T-cell (primary cell): ENCODE measurements at regions of chr7 and their contacts with region 1.

Region 1: GRCh38 chr7:8274589-8274988 is 12.6 kb upstream of the ICA1 start:
- DNase-seq: no peak
- ATAC-seq: no peak
- H3K4me3 ChIP-seq: no peak overlapping the region
- H3K4me3 Mint-ChIP-seq: no peak overlapping the region
- H3K27ac ChIP-seq: no peak overlapping the region
- H3K27ac Mint-ChIP-seq: no peak overlapping the region
- H3K4me1 ChIP-seq: no peaks in the 10 kb centered on the region
- H3K4me1 Mint-ChIP-seq: no peaks in the 10 kb centered on the region
- H3K27me3 ChIP-seq: peaks cover 0 to 4% of the 10 kb centered on the region in 2 experiments
- H3K27me3 Mint-ChIP-seq: peaks cover 6 to 16% of the 10 kb centered on the region in 2 donors

Region 2: DNA sequence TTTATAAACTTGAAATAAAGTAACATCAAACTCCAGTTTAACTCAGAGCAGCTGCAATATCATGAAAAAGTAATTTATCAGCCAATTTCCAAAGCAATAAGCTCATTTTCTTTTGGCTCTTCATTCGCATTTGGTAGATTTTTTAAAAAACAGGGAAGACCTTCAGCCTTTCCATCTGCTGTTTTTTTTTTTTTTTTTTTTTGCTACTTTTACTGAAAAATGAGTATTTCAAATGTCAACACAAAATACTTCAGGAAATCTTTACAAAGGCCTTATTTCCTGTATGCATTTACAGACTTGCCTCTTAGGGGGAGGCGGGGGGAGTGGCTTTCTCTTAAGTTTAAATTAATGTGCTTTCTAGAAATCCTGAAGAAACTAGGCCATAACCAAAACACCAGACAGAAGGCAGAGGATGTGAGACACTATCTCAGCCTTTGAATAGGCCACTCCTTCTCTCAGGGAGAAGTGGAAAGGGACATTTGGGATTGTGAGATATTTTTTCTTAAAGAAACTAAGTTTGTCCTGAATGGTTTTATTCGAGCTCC is 830.7 kb before region 1 on chr7:
- CTCF ChIA-PET with region 1: no interaction called
- POLR2A ChIA-PET with region 1: interaction called in 1 of 2 experiments, 13 read pairs
- DNase-seq: peak in 2 of 35 experiments; percentile 4 to 12
- ATAC-seq: no peak
- H3K4me3 ChIP-seq: no peak overlapping the region
- H3K4me3 Mint-ChIP-seq: no peak overlapping the region
- H3K27ac ChIP-seq: no peak overlapping the region
- H3K27ac Mint-ChIP-seq: peak overlapping the region in 1 of 2 donors; percentile 5
- H3K4me1 ChIP-seq: peaks cover 0 to 5% of the 10 kb centered on the region in 2 experiments
- H3K4me1 Mint-ChIP-seq: peaks cover 10 to 13% (median 11%) of the 10 kb centered on the region in 3 donors
- H3K27me3 ChIP-seq: peaks cover 0 to 3% of the 10 kb centered on the region in 2 experiments
- H3K27me3 Mint-ChIP-seq: peaks cover 0 to 3% of the 10 kb centered on the region in 2 donors

Region 3: DNA sequence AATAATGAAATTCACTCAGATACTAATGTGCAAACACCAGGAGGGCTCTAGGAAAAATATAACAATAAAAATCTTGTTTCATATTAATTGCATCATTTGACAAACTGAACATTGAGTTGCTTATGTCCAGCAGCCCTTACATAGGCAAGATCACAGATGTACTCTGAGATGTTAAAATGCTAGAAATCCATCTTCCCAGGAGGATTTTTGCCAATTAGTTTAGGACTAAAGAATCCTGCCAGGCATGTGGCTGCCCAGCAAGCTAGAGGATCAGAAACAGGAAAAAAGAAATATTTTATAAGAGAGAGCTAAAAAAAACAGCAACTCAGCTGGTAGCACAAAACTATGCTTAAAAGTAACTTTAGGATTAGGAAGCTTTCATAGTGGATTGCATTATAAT is 566.6 kb after region 1 on chr7:
- CTCF ChIA-PET with region 1: no interaction called
- POLR2A ChIA-PET with region 1: no interaction called
- DNase-seq: no peak
- ATAC-seq: no peak
- H3K4me3 ChIP-seq: no peak overlapping the region
- H3K4me3 Mint-ChIP-seq: no peak overlapping the region
- H3K27ac ChIP-seq: no peak overlapping the region
- H3K27ac Mint-ChIP-seq: no peak overlapping the region
- H3K4me1 ChIP-seq: no peaks in the 10 kb centered on the region
- H3K4me1 Mint-ChIP-seq: no peaks in the 10 kb centered on the region
- H3K27me3 ChIP-seq: no peaks in the 10 kb centered on the region
- H3K27me3 Mint-ChIP-seq: no peaks in the 10 kb centered on the region